IMR-90 (cell line): ENCODE measurements at regions of chr14 and their contacts with region 1.

Region 1: GRCh38 chr14:79543971-79544697 is 667.2 kb downstream of the DIO2 start:
- DNase-seq: peak; percentile 66
- ATAC-seq: peak; percentile 30; the same call in 1 of the 2 replicates
- H3K4me3 ChIP-seq: no peak overlapping the region
- H3K27ac ChIP-seq: no peak overlapping the region
- H3K4me1 ChIP-seq: peaks cover 16% of the 10 kb centered on the region; the same call in 1 of the 2 replicates
- H3K27me3 ChIP-seq: no peaks in the 10 kb centered on the region
- CTCF ChIP-seq: peak; percentile 67
- POLR2A ChIP-seq: no peak
- RAD21 ChIP-seq: peak; percentile 59

Region 2: GRCh38 chr14:78974691-78975090 is 569.4 kb before region 1 on chr14:
- CTCF ChIA-PET with region 1: no interaction called
- POLR2A ChIA-PET with region 1: no interaction called
- dilution Hi-C with region 1: no loop called
- in situ Hi-C with region 1: no loop called
- intact Hi-C with region 1: loop called (anchors 5 kb)
- DNase-seq: peak; percentile 82
- ATAC-seq: peak; percentile 21; the same call in 1 of the 2 replicates
- H3K4me3 ChIP-seq: no peak overlapping the region
- H3K27ac ChIP-seq: no peak overlapping the region
- H3K4me1 ChIP-seq: 0 out of 2 replicates have a peak, but pooled peaks cover 2% of the 10 kb centered on the region
- H3K27me3 ChIP-seq: no peaks in the 10 kb centered on the region
- CTCF ChIP-seq: no peak
- POLR2A ChIP-seq: no peak
- RAD21 ChIP-seq: no peak

Region 3: GRCh38 chr14:79011091-79011919 is 532.8 kb before region 1 on chr14:
- CTCF ChIA-PET with region 1: no interaction called
- POLR2A ChIA-PET with region 1: no interaction called
- dilution Hi-C with region 1: no loop called
- in situ Hi-C with region 1: no loop called
- intact Hi-C with region 1: loop called (anchors 2 kb)
- DNase-seq: peak; percentile 84
- ATAC-seq: peak; percentile 86
- H3K4me3 ChIP-seq: no peak overlapping the region
- H3K27ac ChIP-seq: no peak overlapping the region
- H3K4me1 ChIP-seq: no peaks in the 10 kb centered on the region; the same call in 1 of the 2 replicates
- H3K27me3 ChIP-seq: no peaks in the 10 kb centered on the region
- CTCF ChIP-seq: peak; percentile 56
- POLR2A ChIP-seq: no peak
- RAD21 ChIP-seq: peak; percentile 63

Region 4: GRCh38 chr14:79629411-79630287 is 85.5 kb after region 1 on chr14:
- CTCF ChIA-PET with region 1: no interaction called
- POLR2A ChIA-PET with region 1: no interaction called
- dilution Hi-C with region 1: no loop called
- in situ Hi-C with region 1: no loop called
- intact Hi-C with region 1: no loop called
- DNase-seq: no peak
- ATAC-seq: no peak
- H3K4me3 ChIP-seq: no peak overlapping the region
- H3K27ac ChIP-seq: no peak overlapping the region
- H3K4me1 ChIP-seq: no peaks in the 10 kb centered on the region; the same call in 1 of the 2 replicates
- H3K27me3 ChIP-seq: no peaks in the 10 kb centered on the region
- CTCF ChIP-seq: no peak
- POLR2A ChIP-seq: no peak
- RAD21 ChIP-seq: no peak